AG04449 (cell line): ENCODE measurements at regions of chr6 and their contacts with region 1.

Region 1: GRCh38 chr6:31795616-31796298 is at the start of gene VARS1:
- DNase-seq: no peak
- H3K4me3 ChIP-seq: peak within 1 kb of the TSS; percentile 68
- CTCF ChIP-seq: peak; percentile 97

Region 2: DNA sequence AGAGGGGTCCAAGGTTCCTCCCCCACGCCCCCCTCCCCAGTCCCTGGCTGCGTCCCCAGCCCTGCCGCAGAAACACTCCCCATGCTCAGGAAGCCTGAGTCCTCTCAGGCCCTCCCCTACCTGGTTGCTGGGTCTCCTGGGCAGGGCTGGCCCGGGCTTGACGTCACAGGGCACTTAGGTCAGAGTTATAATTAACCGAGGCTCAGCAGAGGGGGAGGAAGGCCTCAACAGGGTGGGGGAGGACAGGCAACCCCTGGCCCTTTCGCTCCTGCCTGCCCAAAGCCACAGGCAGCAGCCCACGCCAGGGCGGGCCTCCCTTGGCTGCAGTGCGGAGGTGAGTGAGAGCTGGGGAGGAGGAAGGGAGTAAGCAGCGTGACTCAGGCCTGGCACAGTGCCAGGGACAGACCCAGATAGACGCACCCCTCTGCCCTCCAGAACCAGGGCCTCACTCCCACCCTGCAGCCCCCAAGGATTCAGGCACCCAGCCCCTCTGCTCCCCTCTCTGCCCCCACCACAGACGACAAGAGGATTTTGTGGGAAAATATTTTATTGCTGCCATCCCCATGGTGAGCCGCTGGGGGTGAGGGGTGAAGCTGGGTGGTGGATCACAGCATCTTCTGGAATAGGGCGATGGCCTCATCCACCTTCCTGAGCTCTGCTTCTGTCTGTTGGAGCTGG is 18.6 kb before region 1 on chr6 and contains the start of gene VWA7:
- CTCF ChIA-PET with region 1: interaction called, 23 read pairs
- POLR2A ChIA-PET with region 1: no interaction called
- DNase-seq: no peak
- H3K4me3 ChIP-seq: no peak within 1 kb of the TSS
- CTCF ChIP-seq: no peak

Region 3: DNA sequence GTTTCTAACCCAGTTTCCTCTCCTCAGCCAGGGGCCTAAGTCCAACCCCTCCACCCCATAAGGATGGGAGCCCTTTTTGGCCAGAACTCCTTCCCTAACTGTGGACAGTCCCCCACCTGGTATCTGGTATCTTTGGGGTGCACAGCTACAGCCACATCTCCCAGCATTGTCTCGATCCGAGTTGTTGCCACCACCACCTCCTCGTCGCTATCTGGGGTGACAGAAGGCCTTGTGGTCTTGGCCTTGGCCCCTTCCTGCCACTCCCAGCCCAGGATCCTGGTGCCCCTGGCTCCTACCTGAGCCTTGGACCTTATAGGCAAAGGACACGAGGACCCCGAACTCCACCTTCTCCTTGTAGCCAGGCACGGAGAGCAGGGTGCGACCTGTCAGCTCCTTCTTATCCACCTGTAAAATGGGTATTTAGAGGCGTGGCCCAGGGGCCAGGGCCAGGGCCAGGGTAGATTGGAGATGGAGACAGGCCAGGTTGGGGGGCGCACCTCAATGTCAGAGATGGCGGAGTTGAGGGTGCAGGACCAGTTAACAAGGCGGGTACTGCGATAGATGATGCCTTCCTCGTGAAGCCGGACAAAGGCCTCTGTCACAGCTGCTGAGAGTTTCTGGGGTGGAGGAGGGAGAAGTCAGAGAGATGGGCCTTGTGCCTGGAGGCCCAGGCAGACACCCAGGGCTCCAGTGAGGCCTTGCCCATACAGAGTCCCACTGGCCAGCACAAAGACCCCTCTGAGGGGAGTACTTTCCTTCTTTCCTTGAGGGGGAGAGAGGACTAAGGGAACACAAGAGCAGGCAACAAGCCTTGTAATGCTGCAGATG is 11.4 kb before region 1 on chr6:
- CTCF ChIA-PET with region 1: interaction called, 23 read pairs
- POLR2A ChIA-PET with region 1: no interaction called
- DNase-seq: no peak
- H3K4me3 ChIP-seq: no peak overlapping the region
- CTCF ChIP-seq: no peak

Region 4: GRCh38 chr6:31806465-31807272 is 10.9 kb after region 1 on chr6 and contains the start of gene LSM2:
- CTCF ChIA-PET with region 1: interaction called, 57 read pairs
- POLR2A ChIA-PET with region 1: interaction called, 15 read pairs
- DNase-seq: peak; percentile 67
- H3K4me3 ChIP-seq: peak within 1 kb of the TSS; percentile 83
- CTCF ChIP-seq: peak; percentile 44

Region 5: DNA sequence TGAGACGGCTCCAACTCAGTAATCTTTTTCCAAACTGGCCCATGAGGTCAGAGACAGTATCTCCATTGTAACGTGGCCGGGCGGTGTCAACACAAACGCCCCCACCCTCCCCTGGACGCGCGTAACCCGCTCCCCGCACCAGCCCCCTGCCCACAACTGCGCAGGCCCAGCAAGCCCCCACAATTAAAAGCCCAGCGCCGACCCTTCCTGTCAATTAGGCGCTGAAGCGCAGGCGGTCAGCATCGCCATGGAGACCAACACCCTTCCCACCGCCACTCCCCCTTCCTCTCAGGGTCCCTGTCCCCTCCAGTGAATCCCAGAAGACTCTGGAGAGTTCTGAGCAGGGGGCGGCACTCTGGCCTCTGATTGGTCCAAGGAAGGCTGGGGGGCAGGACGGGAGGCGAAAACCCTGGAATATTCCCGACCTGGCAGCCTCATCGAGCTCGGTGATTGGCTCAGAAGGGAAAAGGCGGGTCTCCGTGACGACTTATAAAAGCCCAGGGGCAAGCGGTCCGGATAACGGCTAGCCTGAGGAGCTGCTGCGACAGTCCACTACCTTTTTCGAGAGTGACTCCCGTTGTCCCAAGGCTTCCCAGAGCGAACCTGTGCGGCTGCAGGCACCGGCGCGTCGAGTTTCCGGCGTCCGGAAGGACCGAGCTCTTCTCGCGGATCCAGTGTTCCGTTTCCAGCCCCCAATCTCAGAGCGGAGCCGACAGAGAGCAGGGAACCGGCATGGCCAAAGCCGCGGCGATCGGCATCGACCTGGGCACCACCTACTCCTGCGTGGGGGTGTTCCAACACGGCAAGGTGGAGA is 19.5 kb after region 1 on chr6 and contains the starts of genes HSPA1A and HSPA1L:
- CTCF ChIA-PET with region 1: interaction called, 6 read pairs
- POLR2A ChIA-PET with region 1: interaction called, 15 read pairs
- DNase-seq: peak; percentile 63
- H3K4me3 ChIP-seq: peak within 1 kb of the TSS; percentile 80
- CTCF ChIP-seq: no peak

Region 6: GRCh38 chr6:31901953-31902643 is 106.3 kb after region 1 on chr6 and contains the start of gene ZBTB12:
- CTCF ChIA-PET with region 1: no interaction called
- POLR2A ChIA-PET with region 1: no interaction called
- DNase-seq: peak; percentile 80
- H3K4me3 ChIP-seq: peak within 1 kb of the TSS; percentile 73
- CTCF ChIP-seq: no peak